ENCODE measurements at regions of chr12 and their contacts with region 1.

Region 1: DNA sequence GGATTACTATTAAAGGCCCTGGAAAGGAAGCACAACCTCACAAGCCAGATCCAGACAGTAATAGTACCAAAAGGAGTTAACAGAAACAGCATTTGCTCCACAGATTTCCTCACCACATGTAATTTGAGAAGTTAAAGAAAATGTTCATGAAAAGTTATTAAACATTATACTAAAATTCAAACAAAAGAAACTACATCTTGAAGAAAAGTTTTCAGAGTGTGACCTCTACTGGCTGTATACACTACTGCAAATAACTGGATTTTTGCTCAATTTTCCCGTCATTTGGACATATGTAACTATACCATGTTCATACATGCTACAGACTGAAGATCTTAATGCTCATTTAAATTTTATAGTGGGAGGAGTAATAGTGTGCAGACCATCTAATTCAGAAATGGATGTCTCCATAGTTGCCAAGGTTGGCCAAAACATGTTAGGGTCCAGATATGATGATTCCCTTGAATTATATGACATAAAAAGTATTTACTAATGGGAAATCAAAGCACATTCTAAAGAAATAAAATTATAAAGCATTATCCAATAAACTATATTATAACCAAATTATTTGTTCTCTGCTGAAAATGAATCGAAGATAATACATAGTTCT is 5.6 kb downstream of the KRR1 start:
- DNase-seq: no peak
- ATAC-seq: peak in 3 of 4 donors; percentile 35 to 61 (median 55)
- H3K4me3 ChIP-seq: no peak overlapping the region
- H3K27ac ChIP-seq: no peak overlapping the region
- H3K4me1 ChIP-seq: peaks cover 0 to 24% (median 8%) of the 10 kb centered on the region in 4 donors
- H3K27me3 ChIP-seq: no peaks in the 10 kb centered on the region
- CTCF ChIP-seq: peak; percentile 47 to 67 (median 63)
- POLR2A ChIP-seq: no peak

Region 2: GRCh38 chr12:75334384-75335030 is 171.3 kb before region 1 on chr12 and contains the start of gene GLIPR1L1:
- intact Hi-C with region 1: loop called in 1 of 2 experiments (anchors 10 kb)
- DNase-seq: peak; percentile 75 to 86 (median 77)
- ATAC-seq: peak; percentile 83 to 89 (median 86)
- H3K4me3 ChIP-seq: peak within 1 kb of the TSS in 2 of 3 donors; percentile 7 to 24
- H3K27ac ChIP-seq: no peak within 1 kb of the TSS
- H3K4me1 ChIP-seq: peaks cover 0 to 7% (median 3%) of the 10 kb centered on the region in 4 donors
- H3K27me3 ChIP-seq: no peaks in the 10 kb centered on the region
- CTCF ChIP-seq: peak; percentile 89 to 97 (median 94)
- POLR2A ChIP-seq: no peak
- total RNA-seq, gene GLIPR1L1: not detected